Vagina (tissue), 2 donors: ENCODE measurements at regions of chr6 and their contacts with region 1.

Region 1: GRCh38 chr6:142207265-142207877 is 60.3 kb downstream of the VTA1 start:
- DNase-seq: no peak
- H3K4me3 ChIP-seq: no peak overlapping the region
- H3K27ac ChIP-seq: no peak overlapping the region
- H3K4me1 ChIP-seq: no peaks in the 10 kb centered on the region
- H3K27me3 ChIP-seq: no peaks in the 10 kb centered on the region
- CTCF ChIP-seq: peak in 2 of 3 experiments; percentile 38 to 58
- POLR2A ChIP-seq: no peak

Region 2: DNA sequence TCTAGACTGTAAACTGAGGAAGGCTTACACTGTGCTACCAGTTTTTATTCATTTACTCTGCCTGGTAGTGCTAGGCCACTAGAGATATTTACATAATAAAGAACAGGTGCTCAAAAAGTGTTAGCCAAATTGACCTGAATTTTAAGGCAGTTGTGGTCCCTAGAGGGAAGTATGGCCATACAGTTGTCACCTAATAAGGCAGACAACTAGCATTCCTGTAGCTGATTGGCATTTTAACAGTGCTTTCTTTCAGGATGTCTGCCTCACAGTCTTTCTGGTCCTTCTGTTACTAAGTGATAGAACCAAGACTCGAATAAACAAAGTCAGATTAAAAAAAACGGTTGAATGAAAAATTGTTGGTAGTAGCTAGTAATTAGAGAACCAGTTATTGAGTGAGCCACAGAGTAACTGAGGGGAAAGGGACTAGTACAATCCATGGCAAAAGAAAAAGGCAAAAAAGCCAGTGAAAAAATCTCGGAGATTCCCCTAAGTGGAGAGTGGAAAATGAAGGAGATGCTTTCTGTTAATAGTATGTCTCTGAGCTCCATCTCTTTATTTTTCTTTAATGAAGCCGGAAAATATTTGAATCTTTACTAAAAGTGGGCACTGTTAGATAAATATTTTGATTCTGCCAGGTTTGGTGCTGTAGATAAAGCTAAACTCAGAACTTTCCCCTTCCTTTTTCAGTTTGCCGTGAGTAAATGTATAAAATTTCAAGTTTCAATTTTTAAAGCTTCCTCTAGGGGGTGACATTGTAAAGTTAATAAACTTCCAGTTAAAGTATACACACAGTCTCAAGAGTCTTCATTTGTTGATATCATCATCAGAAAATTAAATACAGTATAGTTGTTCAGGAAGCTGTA is 51.2 kb before region 1 on chr6:
- intact Hi-C with region 1: loop called (anchors 10 kb)
- DNase-seq: no peak
- H3K4me3 ChIP-seq: no peak overlapping the region
- H3K27ac ChIP-seq: no peak overlapping the region
- H3K4me1 ChIP-seq: peaks cover 16% of the 10 kb centered on the region
- H3K27me3 ChIP-seq: no peaks in the 10 kb centered on the region
- CTCF ChIP-seq: peak in 1 of 3 experiments; percentile 31
- POLR2A ChIP-seq: no peak